Colonic mucosa (tissue), 4 donors: ENCODE measurements at regions of chr11 and their contacts with region 1.

Region 1: GRCh38 chr11:62710001-62710345 is 2.5 kb downstream of the GNG3 start:
- DNase-seq: peak; percentile 45
- H3K4me3 ChIP-seq: peak overlapping the region; percentile 49
- H3K27ac ChIP-seq: peak overlapping the region; percentile 91
- H3K4me1 ChIP-seq: peaks cover 8% of the 10 kb centered on the region
- H3K27me3 ChIP-seq: no peaks in the 10 kb centered on the region
- CTCF ChIP-seq: no peak

Region 2: GRCh38 chr11:62573592-62574362 is 136.2 kb before region 1 on chr11 and contains the start of gene EEF1G:
- intact Hi-C with region 1: no loop called
- DNase-seq: peak; percentile 99
- H3K4me3 ChIP-seq: peak within 1 kb of the TSS; percentile 85
- H3K27ac ChIP-seq: peak within 1 kb of the TSS; percentile 89
- H3K4me1 ChIP-seq: peaks cover 18% of the 10 kb centered on the region
- H3K27me3 ChIP-seq: no peaks in the 10 kb centered on the region
- CTCF ChIP-seq: no peak
- total RNA-seq, gene EEF1G: 1,328 to 1,358 TPM

Region 3: GRCh38 chr11:62771144-62772021 is 61.4 kb after region 1 on chr11 and contains the start of gene TAF6L:
- intact Hi-C with region 1: loop called (anchors 10 kb)
- DNase-seq: peak; percentile 99
- H3K4me3 ChIP-seq: peak within 1 kb of the TSS; percentile 64
- H3K27ac ChIP-seq: peak within 1 kb of the TSS; percentile 92
- H3K4me1 ChIP-seq: peaks cover 9% of the 10 kb centered on the region
- H3K27me3 ChIP-seq: no peaks in the 10 kb centered on the region
- CTCF ChIP-seq: no peak
- total RNA-seq, gene TAF6L: 15.3 to 26.6 TPM

Region 4: GRCh38 chr11:62823677-62824076 is 113.7 kb after region 1 on chr11:
- intact Hi-C with region 1: loop called (anchors 5 kb)
- DNase-seq: no peak
- H3K4me3 ChIP-seq: no peak overlapping the region
- H3K27ac ChIP-seq: no peak overlapping the region
- H3K4me1 ChIP-seq: no peaks in the 10 kb centered on the region
- H3K27me3 ChIP-seq: no peaks in the 10 kb centered on the region
- CTCF ChIP-seq: no peak